ENCODE measurements at regions of chr2 and their contacts with region 1.

Region 1: GRCh38 chr2:118088051-118089024 is at the start of gene INSIG2:
- DNase-seq: peak; percentile 94 to 97 (median 95)
- H3K4me3 ChIP-seq: peak within 1 kb of the TSS; percentile 83 to 96 (median 92)
- H3K4me3 Mint-ChIP-seq: peak within 1 kb of the TSS; percentile 88 to 98
- H3K27ac ChIP-seq: peak within 1 kb of the TSS; percentile 69 to 92
- H3K27ac Mint-ChIP-seq: peak within 1 kb of the TSS; percentile 48 to 94 (median 89)
- H3K4me1 ChIP-seq: peaks cover 20 to 27% of the 10 kb centered on the region in 2 donors
- H3K4me1 Mint-ChIP-seq: peaks cover 17% of the 10 kb centered on the region
- H3K27me3 ChIP-seq: peaks cover 0 to 8% of the 10 kb centered on the region in 2 donors
- H3K27me3 Mint-ChIP-seq: peaks cover 2 to 8% (median 3%) of the 10 kb centered on the region in 3 donors
- CTCF ChIP-seq: no peak
- polyA plus RNA-seq, gene INSIG2: 13.6 to 17.2 (median 14.8) TPM

Region 2: GRCh38 chr2:117738991-117739839 is 349.1 kb before region 1 on chr2:
- intact Hi-C with region 1: no loop called
- DNase-seq: no peak
- H3K4me3 ChIP-seq: no peak overlapping the region
- H3K4me3 Mint-ChIP-seq: no peak overlapping the region
- H3K27ac ChIP-seq: no peak overlapping the region
- H3K27ac Mint-ChIP-seq: no peak overlapping the region
- H3K4me1 ChIP-seq: no peaks in the 10 kb centered on the region
- H3K4me1 Mint-ChIP-seq: peaks cover 2% of the 10 kb centered on the region
- H3K27me3 ChIP-seq: no peaks in the 10 kb centered on the region
- H3K27me3 Mint-ChIP-seq: peaks cover 0 to 3% (median 1%) of the 10 kb centered on the region in 3 donors
- CTCF ChIP-seq: no peak

Region 3: GRCh38 chr2:118019821-118020220 is 68.5 kb before region 1 on chr2:
- intact Hi-C with region 1: loop called in 1 of 2 experiments (anchors 10 kb)
- DNase-seq: no peak
- H3K4me3 ChIP-seq: no peak overlapping the region
- H3K4me3 Mint-ChIP-seq: no peak overlapping the region
- H3K27ac ChIP-seq: no peak overlapping the region
- H3K27ac Mint-ChIP-seq: peak overlapping the region in 1 of 7 donors; percentile 3
- H3K4me1 ChIP-seq: peaks cover 24 to 33% of the 10 kb centered on the region in 2 donors
- H3K4me1 Mint-ChIP-seq: peaks cover 33% of the 10 kb centered on the region
- H3K27me3 ChIP-seq: no peaks in the 10 kb centered on the region
- H3K27me3 Mint-ChIP-seq: peaks cover 4 to 12% (median 6%) of the 10 kb centered on the region in 3 donors
- CTCF ChIP-seq: no peak

Region 4: GRCh38 chr2:118032169-118033013 is 55.9 kb before region 1 on chr2:
- intact Hi-C with region 1: loop called (anchors 10 kb)
- DNase-seq: peak in 2 of 3 donors; percentile 46 to 73
- H3K4me3 ChIP-seq: no peak overlapping the region
- H3K4me3 Mint-ChIP-seq: no peak overlapping the region
- H3K27ac ChIP-seq: no peak overlapping the region
- H3K27ac Mint-ChIP-seq: peak overlapping the region in 1 of 7 donors; percentile 63
- H3K4me1 ChIP-seq: no peaks in the 10 kb centered on the region
- H3K4me1 Mint-ChIP-seq: no peaks in the 10 kb centered on the region
- H3K27me3 ChIP-seq: peaks cover 4 to 10% of the 10 kb centered on the region in 2 donors
- H3K27me3 Mint-ChIP-seq: peaks cover 13 to 20% (median 19%) of the 10 kb centered on the region in 3 donors
- CTCF ChIP-seq: peak; percentile 91

Region 5: GRCh38 chr2:118291251-118291880 is 203.0 kb after region 1 on chr2:
- intact Hi-C with region 1: no loop called
- DNase-seq: no peak
- H3K4me3 ChIP-seq: no peak overlapping the region
- H3K4me3 Mint-ChIP-seq: peak overlapping the region in 1 of 2 donors; percentile 2
- H3K27ac ChIP-seq: no peak overlapping the region
- H3K27ac Mint-ChIP-seq: no peak overlapping the region
- H3K4me1 ChIP-seq: no peaks in the 10 kb centered on the region
- H3K4me1 Mint-ChIP-seq: no peaks in the 10 kb centered on the region
- H3K27me3 ChIP-seq: no peaks in the 10 kb centered on the region
- H3K27me3 Mint-ChIP-seq: peaks cover 4 to 19% (median 10%) of the 10 kb centered on the region in 3 donors
- CTCF ChIP-seq: no peak

Measured in CD14-positive monocyte (primary cell).